ENCODE measurements at regions of chr1 and their contacts with region 1.

Region 1: DNA sequence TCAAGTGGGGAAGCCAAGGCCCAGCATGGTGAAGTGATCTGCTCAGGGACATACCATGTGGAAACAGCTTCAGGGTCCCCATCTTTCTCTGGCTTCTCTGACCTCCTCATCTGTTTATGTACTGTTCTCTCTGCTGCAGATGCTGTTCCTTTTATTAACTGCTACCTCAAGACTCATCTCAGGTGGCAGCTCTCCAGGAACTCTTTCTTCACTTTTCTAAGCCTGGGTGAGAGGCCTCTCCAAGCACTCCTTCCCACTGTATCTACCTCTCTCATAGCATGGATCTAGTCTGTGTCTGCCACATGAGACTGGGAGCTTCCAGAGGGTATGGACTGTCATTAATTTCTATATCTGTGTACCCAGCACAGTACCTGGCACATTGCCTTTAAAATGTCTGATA is 73.4 kb upstream of the PPM1J start:
- DNase-seq: no peak
- H3K4me3 ChIP-seq: no peak overlapping the region
- H3K27ac ChIP-seq: no peak overlapping the region
- H3K4me1 ChIP-seq: no peaks in the 10 kb centered on the region
- H3K27me3 ChIP-seq: no peaks in the 10 kb centered on the region
- CTCF ChIP-seq: no peak
- EP300 ChIP-seq: no peak
- POLR2A ChIP-seq: no peak

Region 2: GRCh38 chr1:112729909-112730308 is 58.7 kb before region 1 on chr1:
- in situ Hi-C with region 1: loop called in 1 of 4 experiments (anchors 5 kb)
- intact Hi-C with region 1: no loop called
- DNase-seq: no peak
- H3K4me3 ChIP-seq: no peak overlapping the region
- H3K27ac ChIP-seq: no peak overlapping the region
- H3K4me1 ChIP-seq: no peaks in the 10 kb centered on the region
- H3K27me3 ChIP-seq: no peaks in the 10 kb centered on the region
- CTCF ChIP-seq: no peak
- EP300 ChIP-seq: no peak
- POLR2A ChIP-seq: no peak